Endothelial cell of umbilical vein (primary cell): ENCODE measurements at regions of chr13 and their contacts with region 1.

Region 1: DNA sequence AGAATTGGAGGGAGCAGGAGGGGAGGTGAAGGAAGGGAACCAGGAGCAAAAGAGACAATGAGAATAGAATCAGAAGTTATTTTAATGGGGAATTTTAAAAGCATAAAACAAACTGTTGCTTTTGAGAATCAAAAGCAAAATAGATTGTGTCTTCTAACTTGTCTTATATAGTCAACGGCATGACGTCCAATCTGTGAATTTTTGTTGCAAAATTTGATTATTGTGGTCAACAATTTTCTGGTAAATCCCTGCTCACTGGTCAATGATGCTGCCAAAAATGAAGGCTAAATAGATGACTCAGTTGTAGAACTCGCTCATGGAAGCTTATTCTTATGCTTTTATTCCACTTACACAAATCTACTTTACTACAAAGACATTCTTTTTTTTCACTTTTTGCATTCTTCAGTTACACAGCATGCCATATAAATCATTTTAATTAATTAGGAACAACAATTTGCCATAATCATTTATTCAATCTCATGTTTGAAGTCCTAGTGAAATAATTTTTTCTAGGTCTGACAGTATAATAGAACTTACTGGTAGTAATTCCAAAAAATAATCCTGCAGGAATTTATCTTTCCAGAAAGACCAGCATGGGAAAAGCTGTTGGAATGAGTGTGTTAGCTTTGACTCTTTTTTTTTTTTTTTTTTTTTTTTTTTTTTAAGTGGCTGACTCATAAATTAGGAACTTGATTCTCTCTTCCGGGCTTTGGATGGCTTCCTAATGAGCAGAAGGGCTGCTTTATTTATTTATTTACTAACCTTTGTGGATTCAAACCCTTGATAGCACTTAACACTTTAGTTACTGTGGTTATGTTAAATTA is 256.9 kb downstream of the SPRY2 start:
- DNase-seq: peak; percentile 75
- H3K4me3 ChIP-seq: peak overlapping the region in 1 of 3 experiments; percentile 52
- H3K27ac ChIP-seq: peak overlapping the region; percentile 97
- H3K4me1 ChIP-seq: peaks cover 27% of the 10 kb centered on the region
- H3K27me3 ChIP-seq: no peaks in the 10 kb centered on the region
- CTCF ChIP-seq: no peak
- POLR2A ChIP-seq: no peak

Region 2: GRCh38 chr13:79533781-79534400 is 550.2 kb before region 1 on chr13:
- CTCF ChIA-PET with region 1: no interaction called
- POLR2A ChIA-PET with region 1: no interaction called
- dilution Hi-C with region 1: no loop called
- intact Hi-C with region 1: no loop called
- DNase-seq: no peak
- H3K4me3 ChIP-seq: no peak overlapping the region
- H3K27ac ChIP-seq: no peak overlapping the region
- H3K4me1 ChIP-seq: no peaks in the 10 kb centered on the region
- H3K27me3 ChIP-seq: no peaks in the 10 kb centered on the region
- CTCF ChIP-seq: no peak
- POLR2A ChIP-seq: no peak

Region 3: GRCh38 chr13:79767126-79767525 is 316.9 kb before region 1 on chr13:
- CTCF ChIA-PET with region 1: no interaction called
- POLR2A ChIA-PET with region 1: no interaction called
- dilution Hi-C with region 1: no loop called
- intact Hi-C with region 1: loop called (anchors 1 kb)
- DNase-seq: peak; percentile 73
- H3K4me3 ChIP-seq: no peak overlapping the region
- H3K27ac ChIP-seq: peak overlapping the region; percentile 76
- H3K4me1 ChIP-seq: peaks cover 14% of the 10 kb centered on the region
- H3K27me3 ChIP-seq: no peaks in the 10 kb centered on the region
- CTCF ChIP-seq: no peak
- POLR2A ChIP-seq: no peak

Region 4: DNA sequence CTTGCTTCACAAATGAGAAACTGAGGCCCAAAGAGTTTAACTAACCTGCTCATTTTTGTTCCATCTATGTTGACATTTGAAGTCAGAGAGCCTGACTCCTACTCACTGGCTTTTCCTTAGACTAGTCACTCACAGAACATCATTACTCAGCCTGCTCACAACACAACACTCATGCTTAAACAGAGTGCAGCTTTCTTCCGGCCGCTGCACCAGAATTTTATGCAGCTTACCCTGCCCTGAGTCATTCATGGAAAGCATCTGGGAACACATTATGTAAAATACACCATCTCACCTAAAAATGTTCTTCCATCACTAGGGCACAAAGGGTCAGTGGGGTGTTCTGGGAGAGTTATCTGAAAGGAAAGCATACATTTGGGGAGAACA is 46.6 kb before region 1 on chr13:
- CTCF ChIA-PET with region 1: interaction called, 4 read pairs
- POLR2A ChIA-PET with region 1: no interaction called
- dilution Hi-C with region 1: no loop called
- intact Hi-C with region 1: loop called (anchors 1 kb)
- DNase-seq: peak; percentile 77
- H3K4me3 ChIP-seq: no peak overlapping the region
- H3K27ac ChIP-seq: peak overlapping the region; percentile 77
- H3K4me1 ChIP-seq: peaks cover 36% of the 10 kb centered on the region
- H3K27me3 ChIP-seq: no peaks in the 10 kb centered on the region
- CTCF ChIP-seq: no peak
- POLR2A ChIP-seq: no peak

Region 5: GRCh38 chr13:80048802-80049201 is 35.3 kb before region 1 on chr13:
- CTCF ChIA-PET with region 1: interaction called, 3 read pairs
- POLR2A ChIA-PET with region 1: no interaction called
- dilution Hi-C with region 1: no loop called
- intact Hi-C with region 1: loop called (anchors 1 kb)
- DNase-seq: peak; percentile 91
- H3K4me3 ChIP-seq: no peak overlapping the region
- H3K27ac ChIP-seq: peak overlapping the region; percentile 36
- H3K4me1 ChIP-seq: peaks cover 26% of the 10 kb centered on the region
- H3K27me3 ChIP-seq: no peaks in the 10 kb centered on the region
- CTCF ChIP-seq: no peak
- POLR2A ChIP-seq: no peak

Region 6: GRCh38 chr13:80132741-80133601 is 48.9 kb after region 1 on chr13:
- CTCF ChIA-PET with region 1: no interaction called
- POLR2A ChIA-PET with region 1: interaction called, 3 read pairs
- dilution Hi-C with region 1: no loop called
- intact Hi-C with region 1: loop called (anchors 2 kb)
- DNase-seq: peak; percentile 84
- H3K4me3 ChIP-seq: peak overlapping the region in 1 of 3 experiments; percentile 21
- H3K27ac ChIP-seq: peak overlapping the region; percentile 32
- H3K4me1 ChIP-seq: peaks cover 23% of the 10 kb centered on the region
- H3K27me3 ChIP-seq: no peaks in the 10 kb centered on the region
- CTCF ChIP-seq: no peak
- POLR2A ChIP-seq: no peak

Region 7: GRCh38 chr13:80235166-80235966 is 151.3 kb after region 1 on chr13:
- CTCF ChIA-PET with region 1: interaction called, 4 read pairs
- POLR2A ChIA-PET with region 1: no interaction called
- dilution Hi-C with region 1: no loop called
- intact Hi-C with region 1: loop called (anchors 1 kb)
- DNase-seq: peak; percentile 79
- H3K4me3 ChIP-seq: peak overlapping the region in 1 of 3 experiments; percentile 41
- H3K27ac ChIP-seq: peak overlapping the region; percentile 89
- H3K4me1 ChIP-seq: peaks cover 18% of the 10 kb centered on the region
- H3K27me3 ChIP-seq: no peaks in the 10 kb centered on the region
- CTCF ChIP-seq: no peak
- POLR2A ChIP-seq: no peak